ENCODE measurements at regions of chr1 and their contacts with region 1.

Region 1: DNA sequence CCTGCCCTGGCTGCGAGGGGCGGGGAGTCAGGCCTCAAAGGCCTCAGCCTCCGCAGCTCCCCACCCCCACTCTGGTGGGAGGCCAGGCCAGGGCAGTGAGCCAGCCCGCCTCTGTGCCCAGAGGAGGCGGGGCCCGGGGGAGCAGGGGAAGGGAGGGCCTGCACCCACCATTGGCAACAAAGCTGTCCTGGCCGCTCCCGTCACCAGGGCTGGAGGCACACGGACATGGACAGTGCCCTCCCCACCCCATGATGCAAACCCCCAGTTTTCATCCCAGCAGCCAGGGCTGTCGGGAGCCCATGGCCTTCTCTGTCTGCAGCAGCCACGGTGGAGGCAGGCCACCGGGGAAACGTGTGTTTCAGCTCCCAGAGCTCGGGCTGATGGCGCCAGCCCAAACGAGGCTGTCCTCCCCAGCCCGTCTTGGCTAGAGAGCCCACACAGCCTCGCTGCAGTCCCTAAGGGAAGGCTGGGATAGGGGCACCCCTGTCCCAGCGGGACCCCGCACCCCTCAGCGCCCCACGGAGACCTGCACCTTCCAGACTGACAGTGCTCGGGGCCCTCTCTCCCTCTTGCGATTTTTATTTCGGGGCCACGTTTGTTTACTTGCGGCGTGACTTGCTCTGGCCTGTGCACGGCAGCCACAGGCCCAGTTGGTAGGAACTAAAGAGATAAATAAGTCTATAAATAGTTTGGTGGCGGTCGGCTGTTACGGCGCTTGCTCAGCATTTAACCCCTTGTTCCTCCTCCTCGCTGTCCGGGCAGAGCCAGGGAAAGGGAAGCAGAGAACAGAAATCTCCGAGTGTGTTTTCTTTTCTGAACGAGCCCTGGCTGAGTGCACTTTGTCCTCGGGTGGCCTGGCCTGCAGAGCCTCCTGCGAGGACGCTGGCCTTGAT is 101.8 kb downstream of the PRDM16 start:
- DNase-seq: peak; percentile 87
- ATAC-seq: peak; percentile 85

Region 2: GRCh38 chr1:3069491-3070303 is 101.1 kb before region 1 on chr1:
- intact Hi-C with region 1: loop called (anchors 5 kb)
- DNase-seq: peak; percentile 55
- ATAC-seq: peak; percentile 39

Region 3: GRCh38 chr1:3133686-3134085 is 37.1 kb before region 1 on chr1:
- intact Hi-C with region 1: loop called (anchors 5 kb)
- DNase-seq: no peak
- ATAC-seq: no peak

Region 4: GRCh38 chr1:3207217-3207848 is 36.5 kb after region 1 on chr1:
- intact Hi-C with region 1: no loop called
- DNase-seq: no peak
- ATAC-seq: no peak

Region 5: DNA sequence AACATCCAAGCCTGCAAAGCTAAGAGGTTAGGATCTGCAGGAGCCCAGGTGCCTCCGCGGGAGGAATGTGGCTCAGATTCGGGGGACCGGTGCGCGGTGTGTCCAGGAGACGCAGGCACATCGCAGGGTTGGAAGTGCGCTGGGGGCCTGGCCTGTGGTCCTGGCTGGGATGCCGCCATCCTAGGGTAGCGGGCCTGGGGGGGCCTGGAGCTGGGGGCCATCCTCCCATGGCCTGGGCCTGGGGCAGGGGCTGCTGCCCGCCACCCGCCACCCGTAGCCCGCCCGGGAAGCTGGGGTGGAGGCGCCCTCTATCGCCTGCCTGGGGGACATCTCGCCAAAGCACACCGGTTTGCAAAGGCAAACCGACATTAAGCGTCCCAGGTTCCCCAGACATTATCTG is 113.0 kb after region 1 on chr1:
- intact Hi-C with region 1: loop called (anchors 5 kb)
- DNase-seq: no peak
- ATAC-seq: peak; percentile 77

Measured in Right ventricle myocardium inferior (tissue), 1 donor.